ENCODE measurements at regions of chr9 and their contacts with region 1.

Region 1: GRCh38 chr9:91253488-91253887 is 108.2 kb downstream of the AUH start:
- DNase-seq: peak; percentile 67
- H3K4me3 Mint-ChIP-seq: no peak overlapping the region
- H3K27ac Mint-ChIP-seq: no peak overlapping the region
- H3K4me1 Mint-ChIP-seq: peaks cover 62% of the 10 kb centered on the region
- H3K27me3 Mint-ChIP-seq: no peaks in the 10 kb centered on the region

Region 2: DNA sequence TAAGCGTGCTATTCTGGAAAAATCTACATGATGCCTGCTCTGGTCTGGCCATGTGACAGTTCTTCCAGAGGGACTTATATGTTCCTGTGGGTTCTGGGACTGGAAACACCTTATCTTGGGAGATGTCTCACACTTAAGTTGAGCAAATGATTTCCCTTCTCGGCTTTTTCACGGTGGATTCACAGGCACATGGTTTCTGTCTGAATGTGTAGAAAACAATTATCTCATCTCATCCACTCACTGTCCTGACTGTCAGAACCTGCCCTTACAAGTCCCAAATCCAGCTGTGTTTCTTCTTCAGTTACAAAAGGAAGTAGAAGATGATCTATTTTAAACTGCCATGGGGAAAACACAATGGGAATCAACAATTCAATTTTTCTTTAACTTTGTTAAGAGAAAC is 267.9 kb before region 1 on chr9:
- intact Hi-C with region 1: loop called (anchors 10 kb)
- DNase-seq: no peak
- H3K4me3 Mint-ChIP-seq: no peak overlapping the region
- H3K27ac Mint-ChIP-seq: no peak overlapping the region
- H3K4me1 Mint-ChIP-seq: peaks cover 29% of the 10 kb centered on the region
- H3K27me3 Mint-ChIP-seq: no peaks in the 10 kb centered on the region

Region 3: DNA sequence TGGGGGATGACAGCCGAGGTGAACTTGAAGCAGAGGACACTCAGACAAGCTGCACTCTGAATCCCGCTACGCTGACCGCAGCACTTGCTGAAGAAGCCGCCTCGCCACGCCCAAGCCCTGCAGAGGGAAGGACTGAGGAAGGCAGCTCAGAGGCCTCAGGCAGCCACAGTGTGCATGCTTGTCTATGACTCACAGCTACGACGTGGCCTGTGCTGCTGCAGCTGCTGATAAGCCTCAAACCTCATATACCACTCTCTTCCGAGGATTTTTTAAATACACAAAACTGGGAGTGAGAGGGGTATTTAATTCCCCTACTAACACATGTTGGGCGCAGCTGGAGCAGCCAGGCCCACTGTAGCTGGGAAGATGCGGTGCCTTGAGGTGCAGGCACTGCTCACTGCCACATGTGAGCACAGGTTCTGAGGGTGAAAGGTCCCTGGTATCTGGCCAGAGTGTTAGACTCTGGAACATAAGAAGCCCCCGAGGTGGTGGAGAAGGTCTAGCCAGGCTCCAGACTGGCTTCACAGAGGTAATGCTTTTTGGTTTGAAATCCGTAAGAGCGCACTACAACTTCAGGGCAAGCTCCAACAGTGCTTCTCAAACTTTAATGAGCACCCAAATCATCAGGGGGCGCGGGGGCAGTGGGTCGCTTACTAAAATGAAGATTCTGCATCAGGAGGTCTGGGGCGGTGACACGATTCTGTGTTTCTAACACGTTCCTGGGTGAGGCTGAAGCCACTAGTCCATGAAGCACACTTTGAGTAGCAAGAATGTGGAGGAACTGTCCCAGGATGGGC is 88.6 kb before region 1 on chr9:
- intact Hi-C with region 1: loop called (anchors 1 kb)
- DNase-seq: peak; percentile 82
- H3K4me3 Mint-ChIP-seq: peak overlapping the region; percentile 84
- H3K27ac Mint-ChIP-seq: peak overlapping the region; percentile 98
- H3K4me1 Mint-ChIP-seq: peaks cover 58% of the 10 kb centered on the region
- H3K27me3 Mint-ChIP-seq: no peaks in the 10 kb centered on the region

Region 4: DNA sequence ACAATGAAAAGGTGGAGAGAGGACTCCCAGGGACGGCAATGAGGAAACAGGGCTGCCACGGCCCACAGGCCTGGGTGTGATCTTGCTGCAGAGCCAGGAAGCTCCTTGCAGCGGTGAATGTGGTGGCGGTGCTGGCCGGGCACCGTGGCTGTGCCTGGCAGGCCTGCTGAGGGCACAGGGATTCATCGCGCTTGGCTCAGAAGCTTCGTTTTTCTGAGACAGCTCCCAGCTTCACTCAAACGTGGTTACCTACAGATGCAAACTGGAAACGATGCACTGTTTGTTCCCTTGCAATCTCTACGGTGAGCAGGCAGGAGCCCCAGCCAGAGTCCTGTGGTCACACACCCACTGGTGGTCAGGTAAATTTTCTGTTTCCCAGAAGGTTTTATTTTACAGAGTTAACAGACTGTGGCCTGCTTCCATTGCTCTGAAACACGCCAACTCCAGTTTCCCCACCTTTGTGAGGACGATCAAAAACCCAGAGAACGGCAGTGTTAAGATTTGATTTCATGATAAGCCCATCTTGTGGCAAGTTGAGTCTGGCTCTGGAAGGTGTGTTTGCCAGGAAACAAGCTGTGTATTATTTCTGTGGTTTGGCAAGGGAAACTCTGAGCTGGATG is 75.7 kb before region 1 on chr9:
- intact Hi-C with region 1: no loop called
- DNase-seq: peak; percentile 30
- H3K4me3 Mint-ChIP-seq: peak overlapping the region; percentile 41
- H3K27ac Mint-ChIP-seq: peak overlapping the region; percentile 99
- H3K4me1 Mint-ChIP-seq: peaks cover 55% of the 10 kb centered on the region
- H3K27me3 Mint-ChIP-seq: no peaks in the 10 kb centered on the region

Region 5: DNA sequence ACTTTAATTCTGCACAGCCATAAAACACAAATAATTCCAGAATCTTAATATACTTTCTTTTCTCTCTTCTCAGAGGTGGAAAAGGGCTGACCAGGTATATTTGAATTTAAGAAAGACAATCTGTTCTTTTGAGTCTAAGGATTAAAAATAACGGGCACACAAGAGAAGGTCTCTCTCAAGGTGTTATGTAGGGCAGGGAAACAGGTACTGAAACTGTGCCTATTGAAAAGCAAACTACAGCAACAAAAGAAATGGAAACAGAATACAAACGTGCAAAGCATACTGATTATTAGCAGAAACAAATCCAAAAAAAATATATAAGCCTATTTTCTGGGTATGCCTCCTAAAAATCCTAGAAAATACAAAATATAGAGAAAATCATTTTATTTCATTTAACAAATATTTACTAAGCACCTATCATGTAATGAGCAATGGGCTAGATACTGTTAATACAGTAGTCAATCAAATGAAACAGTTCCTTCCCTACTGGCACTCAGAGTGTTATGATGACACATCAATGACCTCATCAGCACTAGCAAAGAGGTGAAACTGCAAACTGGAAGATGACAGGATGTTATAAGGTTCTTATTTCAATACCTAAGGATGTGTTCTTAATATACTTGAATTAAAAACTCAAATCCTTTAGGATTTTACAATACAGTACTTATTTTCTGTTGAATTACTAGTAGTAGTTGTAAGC is 20.5 kb after region 1 on chr9:
- intact Hi-C with region 1: loop called (anchors 2 kb)
- DNase-seq: no peak
- H3K4me3 Mint-ChIP-seq: no peak overlapping the region
- H3K27ac Mint-ChIP-seq: peak overlapping the region; percentile 46
- H3K4me1 Mint-ChIP-seq: peaks cover 27% of the 10 kb centered on the region
- H3K27me3 Mint-ChIP-seq: no peaks in the 10 kb centered on the region

Region 6: DNA sequence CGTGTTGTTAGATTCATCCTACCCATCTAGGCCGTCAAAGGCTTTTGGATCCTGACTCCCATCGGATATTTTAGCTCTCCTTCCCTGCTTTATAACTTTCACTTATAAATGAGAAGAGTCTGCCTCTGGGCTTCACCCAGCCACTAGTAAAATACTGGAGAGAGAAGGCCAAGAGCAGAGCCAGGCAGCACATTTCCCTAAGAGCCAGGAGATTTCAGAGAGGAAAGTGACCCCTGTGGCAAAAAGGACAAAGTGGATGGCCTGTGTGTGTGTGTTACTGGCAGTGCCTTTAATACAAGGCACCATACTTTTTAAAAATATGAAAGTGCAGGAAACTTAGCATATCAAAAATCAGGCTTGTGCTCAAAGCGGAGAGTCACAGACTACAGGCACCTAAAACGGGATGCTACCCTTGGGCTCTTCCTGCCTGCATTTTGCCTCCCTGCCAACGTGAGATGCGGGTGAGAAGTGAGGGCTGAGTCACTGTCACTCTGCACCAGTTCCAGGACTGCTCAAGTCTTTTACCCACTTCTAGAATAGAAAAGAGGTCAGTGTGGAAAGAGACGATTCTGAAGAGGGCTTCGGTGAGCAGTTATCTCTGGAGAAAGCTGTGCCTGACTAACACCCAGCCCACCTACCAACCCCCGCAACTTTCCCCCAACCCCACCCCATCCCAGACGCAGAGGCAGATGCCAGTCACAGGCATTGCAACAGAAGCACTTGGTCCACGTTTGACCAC is 154.3 kb after region 1 on chr9:
- intact Hi-C with region 1: no loop called
- DNase-seq: no peak
- H3K4me3 Mint-ChIP-seq: no peak overlapping the region
- H3K27ac Mint-ChIP-seq: no peak overlapping the region
- H3K4me1 Mint-ChIP-seq: peaks cover 52% of the 10 kb centered on the region
- H3K27me3 Mint-ChIP-seq: no peaks in the 10 kb centered on the region

Measured in activated T-helper 2 cell treated with anti-CD3 and anti-CD28 coated beads, Interferon-gamma antibody, Interleukin-2, Interleukin-4, amounts not matched to agents 10 μg/mL and 5 μg/mL and 100 μg/mL, durations not matched to agents 14 hours and 24 hours and 36 hours (primary cell).